ENCODE measurements at regions of chr6 and their contacts with region 1.

Region 1: DNA sequence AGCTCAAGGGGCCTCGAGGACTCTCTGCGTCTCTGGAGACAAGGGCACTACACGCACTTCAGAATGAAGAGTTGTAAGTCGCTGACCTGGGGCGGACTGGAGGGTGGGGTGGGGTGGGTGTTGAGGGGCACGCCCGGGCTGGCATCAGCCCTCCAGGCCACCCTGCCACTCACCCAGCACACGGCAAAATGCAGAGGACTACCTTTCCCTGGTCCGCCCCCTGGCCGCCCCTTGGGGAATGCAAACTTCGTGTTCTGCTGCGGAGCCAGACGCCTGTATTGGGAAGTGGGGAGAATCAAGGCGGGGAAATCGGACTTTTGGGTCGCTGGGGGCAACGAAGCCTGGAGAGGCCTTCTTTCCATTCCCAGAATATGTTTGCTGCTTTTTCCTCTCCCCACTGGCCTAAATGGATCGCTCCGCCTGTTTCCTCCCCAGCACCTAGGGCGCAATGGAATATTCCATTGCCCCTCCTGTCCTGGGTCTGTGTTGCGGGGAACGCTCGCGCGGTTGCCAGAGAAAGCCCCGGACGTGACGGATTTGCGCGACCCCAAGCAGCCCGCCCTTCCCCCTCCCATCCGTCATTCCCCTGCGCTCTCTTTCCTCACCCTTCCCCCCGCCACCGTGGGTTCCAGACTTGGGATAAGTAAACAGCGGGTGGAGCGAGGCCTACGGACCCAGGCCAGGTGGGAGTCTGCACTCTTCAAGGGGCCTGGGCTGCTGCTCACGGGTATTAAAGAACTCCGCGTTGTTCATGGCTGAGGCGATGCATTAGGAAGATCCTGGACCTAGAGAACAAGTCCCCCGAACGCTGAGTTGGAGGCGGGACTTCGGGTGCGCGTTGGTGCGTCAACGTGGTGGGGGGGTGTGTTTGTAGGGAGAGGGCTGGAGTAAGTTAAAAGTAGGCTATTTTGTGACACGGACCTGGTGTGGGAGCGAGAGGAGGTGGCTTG is at the start of gene PPT2:
- DNase-seq: peak; percentile 90

Region 2: DNA sequence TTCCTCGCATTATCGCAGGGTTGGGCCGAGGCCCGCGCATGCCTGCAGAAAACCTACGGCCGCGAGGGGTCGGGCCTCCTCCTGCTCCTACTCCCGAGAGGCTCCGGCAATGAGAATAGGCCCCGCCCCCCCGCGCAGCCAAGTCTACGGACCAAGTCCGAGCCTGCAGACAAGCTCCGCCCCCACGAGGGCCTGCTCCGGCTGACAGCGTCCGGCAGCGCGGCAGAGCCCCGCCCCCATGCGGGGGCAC is 41.7 kb after region 1 on chr6:
- CTCF ChIA-PET with region 1: no interaction called
- POLR2A ChIA-PET with region 1: interaction called, 16 read pairs
- DNase-seq: peak; percentile 98

Region 3: GRCh38 chr6:32868257-32868788 is 714.5 kb after region 1 on chr6:
- CTCF ChIA-PET with region 1: no interaction called
- POLR2A ChIA-PET with region 1: no interaction called
- DNase-seq: peak; percentile 60